GM13977 (cell line): ENCODE measurements at regions of chr3 and their contacts with region 1.

Region 1: GRCh38 chr3:142993958-142994442 is 7.4 kb upstream of the U2SURP start:
- DNase-seq: peak; percentile 75
- CTCF ChIP-seq: peak; percentile 75

Region 2: GRCh38 chr3:142578327-142579223 is 415.4 kb before region 1 on chr3 and contains the start of gene ATR:
- in situ Hi-C with region 1: loop called (anchors 25 kb)
- DNase-seq: peak; percentile 91
- CTCF ChIP-seq: no peak

Region 3: GRCh38 chr3:142628801-142629200 is 365.2 kb before region 1 on chr3:
- in situ Hi-C with region 1: no loop called
- DNase-seq: no peak
- CTCF ChIP-seq: no peak

Region 4: GRCh38 chr3:142828703-142829305 is 165.2 kb before region 1 on chr3:
- in situ Hi-C with region 1: loop called (anchors 10 kb)
- DNase-seq: peak; percentile 68
- CTCF ChIP-seq: peak; percentile 95